Activated B cell treated with CpG ODN at 0.5 μM for 24 hours (primary cell): ENCODE measurements at regions of chr16 and their contacts with region 1.

Region 1: DNA sequence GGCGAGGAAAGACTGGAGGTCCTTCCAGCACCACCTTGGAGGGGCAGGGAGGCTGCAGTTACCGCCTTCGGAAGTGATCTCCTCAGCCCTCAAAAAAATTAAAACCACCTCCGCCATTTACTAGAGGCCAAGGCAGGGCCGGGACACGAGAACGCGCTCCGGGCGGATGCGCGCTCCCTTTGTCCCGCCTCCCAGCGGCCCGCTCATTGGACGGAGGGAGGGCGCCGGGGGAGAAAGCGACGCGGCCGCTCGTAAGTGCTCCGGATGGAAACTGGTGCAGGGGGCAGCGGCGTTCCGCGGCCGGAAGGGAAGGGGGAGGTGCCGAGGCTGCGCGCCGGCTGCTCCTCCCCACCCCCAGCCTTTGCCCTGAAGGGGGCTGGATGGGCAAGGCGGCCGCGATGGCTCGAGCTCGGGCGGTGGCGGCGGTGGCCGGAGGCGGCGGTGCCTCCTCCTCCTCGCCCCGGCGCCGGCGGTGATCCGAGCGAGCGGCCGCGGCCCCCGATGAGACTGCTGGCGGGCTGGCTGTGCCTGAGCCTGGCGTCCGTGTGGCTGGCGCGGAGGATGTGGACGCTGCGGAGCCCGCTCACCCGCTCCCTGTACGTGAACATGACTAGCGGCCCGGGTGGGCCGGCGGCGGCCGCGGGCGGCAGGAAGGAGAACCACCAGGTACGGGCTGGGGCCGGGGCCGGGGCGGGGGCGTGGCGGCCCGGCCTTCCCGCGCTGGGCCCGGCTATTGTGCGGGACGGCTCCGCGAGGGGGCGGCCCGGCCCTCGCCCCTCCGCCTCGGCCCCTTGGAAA is at the start of gene METTL9:
- DNase-seq: peak; percentile 94
- ATAC-seq: peak; percentile 92
- H3K4me3 Mint-ChIP-seq: peak within 1 kb of the TSS; percentile 89
- H3K27ac Mint-ChIP-seq: peak within 1 kb of the TSS; percentile 93
- H3K4me1 Mint-ChIP-seq: peaks cover 33% of the 10 kb centered on the region
- H3K27me3 Mint-ChIP-seq: no peaks in the 10 kb centered on the region
- CTCF ChIP-seq: no peak
- total RNA-seq, gene METTL9: 53.3 and 59.2 TPM in 2 replicates

Region 2: GRCh38 chr16:21300309-21301167 is 298.9 kb before region 1 on chr16:
- CTCF ChIA-PET with region 1: no interaction called
- POLR2A ChIA-PET with region 1: no interaction called
- intact Hi-C with region 1: no loop called
- DNase-seq: peak; percentile 43
- ATAC-seq: peak; percentile 43
- H3K4me3 Mint-ChIP-seq: peak overlapping the region; percentile 97
- H3K27ac Mint-ChIP-seq: peak overlapping the region; percentile 88
- H3K4me1 Mint-ChIP-seq: peaks cover 30% of the 10 kb centered on the region
- H3K27me3 Mint-ChIP-seq: peaks cover 3% of the 10 kb centered on the region
- CTCF ChIP-seq: no peak

Region 3: GRCh38 chr16:21523411-21524067 is 75.9 kb before region 1 on chr16:
- CTCF ChIA-PET with region 1: no interaction called
- POLR2A ChIA-PET with region 1: no interaction called
- intact Hi-C with region 1: loop called (anchors 1 kb)
- DNase-seq: no peak
- ATAC-seq: no peak
- H3K4me3 Mint-ChIP-seq: no peak overlapping the region
- H3K27ac Mint-ChIP-seq: peak overlapping the region; percentile 39
- H3K4me1 Mint-ChIP-seq: peaks cover 3% of the 10 kb centered on the region
- H3K27me3 Mint-ChIP-seq: no peaks in the 10 kb centered on the region
- CTCF ChIP-seq: no peak

Region 4: DNA sequence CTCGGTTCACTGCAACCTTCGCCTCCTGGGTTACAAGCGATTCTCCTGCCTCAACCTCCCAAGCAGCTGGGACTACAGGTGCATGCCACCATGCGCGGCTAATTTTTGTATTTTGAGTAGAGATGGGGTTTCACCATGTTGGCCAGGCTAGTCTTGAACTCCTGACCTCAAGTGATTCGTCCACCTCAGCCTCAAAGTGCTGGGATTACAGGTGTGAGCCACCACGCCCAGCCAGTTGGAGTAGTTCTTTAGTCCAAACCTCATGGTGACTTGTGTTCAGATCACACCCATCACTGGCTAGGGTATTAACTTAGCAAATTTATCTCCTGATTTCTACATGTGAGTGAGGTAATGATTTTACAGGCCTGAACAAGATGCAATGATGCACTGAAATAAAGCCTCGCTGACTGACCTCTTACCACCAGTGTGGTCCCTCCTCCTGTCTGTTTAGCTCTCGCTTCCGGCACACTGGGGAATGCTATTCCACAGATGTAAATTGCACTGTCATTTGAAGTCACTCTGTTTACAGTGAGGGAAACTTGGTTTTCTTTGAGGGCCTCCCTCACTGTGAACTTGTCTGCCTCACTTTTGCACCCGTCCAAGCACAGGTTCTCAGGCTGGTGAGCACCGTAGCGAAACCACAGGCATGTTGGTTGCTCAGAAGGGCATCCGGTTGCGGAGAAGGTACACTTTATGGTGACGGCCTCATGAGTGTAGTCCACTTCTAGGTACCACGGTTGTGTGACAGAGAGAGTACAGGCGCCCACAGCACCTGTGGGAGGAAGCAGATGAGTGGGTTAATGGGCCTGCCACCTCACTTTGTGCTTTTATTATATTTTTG is 47.5 kb after region 1 on chr16:
- CTCF ChIA-PET with region 1: no interaction called
- POLR2A ChIA-PET with region 1: interaction called, 12 read pairs
- intact Hi-C with region 1: loop called (anchors 1 kb)
- DNase-seq: peak; percentile 42
- ATAC-seq: peak; percentile 83
- H3K4me3 Mint-ChIP-seq: peak overlapping the region; percentile 53
- H3K27ac Mint-ChIP-seq: peak overlapping the region; percentile 89
- H3K4me1 Mint-ChIP-seq: peaks cover 77% of the 10 kb centered on the region
- H3K27me3 Mint-ChIP-seq: no peaks in the 10 kb centered on the region
- CTCF ChIP-seq: no peak

Region 5: DNA sequence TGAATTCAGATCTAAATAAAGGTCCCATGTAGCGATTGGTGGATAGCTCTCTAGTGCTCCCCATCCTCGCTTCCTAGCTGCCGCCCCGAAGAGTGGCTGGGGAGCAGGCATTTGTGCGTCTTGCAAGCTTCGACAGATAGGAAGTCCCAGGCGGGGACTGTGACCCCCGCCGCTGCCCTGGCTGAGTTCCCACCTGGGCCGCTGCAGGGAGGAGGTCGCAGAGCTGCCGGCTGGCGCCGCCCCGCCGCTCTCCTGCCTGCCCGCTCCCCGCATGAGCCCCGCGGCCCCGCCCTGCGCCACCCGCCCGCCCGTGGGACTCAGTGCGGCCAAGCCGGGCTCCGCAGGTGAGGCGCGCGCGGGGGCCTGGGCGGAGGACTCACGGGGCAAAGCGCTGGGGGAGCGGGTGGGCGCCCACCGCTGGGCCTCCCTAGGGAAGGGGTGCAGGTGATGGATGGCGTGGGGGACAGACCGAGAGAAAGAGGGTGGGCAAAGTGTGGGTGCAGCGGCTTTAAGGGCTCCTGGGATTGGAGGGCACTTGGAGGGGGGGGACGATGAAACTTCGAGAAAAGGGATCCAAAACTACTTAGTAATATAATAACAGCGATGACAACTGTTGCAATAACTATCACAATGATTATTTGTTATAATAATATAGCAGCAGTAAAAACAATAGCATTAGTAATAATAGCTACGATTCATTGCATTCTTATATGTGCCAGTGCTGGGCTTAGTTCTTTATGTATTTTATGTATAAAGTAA is 64.6 kb after region 1 on chr16 and contains the start of gene OTOA:
- CTCF ChIA-PET with region 1: no interaction called
- POLR2A ChIA-PET with region 1: no interaction called
- intact Hi-C with region 1: no loop called
- DNase-seq: peak; percentile 43
- ATAC-seq: peak; percentile 87
- H3K4me3 Mint-ChIP-seq: peak within 1 kb of the TSS; percentile 78
- H3K27ac Mint-ChIP-seq: no peak within 1 kb of the TSS
- H3K4me1 Mint-ChIP-seq: peaks cover 35% of the 10 kb centered on the region
- H3K27me3 Mint-ChIP-seq: peaks cover 2% of the 10 kb centered on the region
- CTCF ChIP-seq: no peak
- total RNA-seq, gene OTOA: 0.42 and 0.60 TPM in 2 replicates

Region 6: DNA sequence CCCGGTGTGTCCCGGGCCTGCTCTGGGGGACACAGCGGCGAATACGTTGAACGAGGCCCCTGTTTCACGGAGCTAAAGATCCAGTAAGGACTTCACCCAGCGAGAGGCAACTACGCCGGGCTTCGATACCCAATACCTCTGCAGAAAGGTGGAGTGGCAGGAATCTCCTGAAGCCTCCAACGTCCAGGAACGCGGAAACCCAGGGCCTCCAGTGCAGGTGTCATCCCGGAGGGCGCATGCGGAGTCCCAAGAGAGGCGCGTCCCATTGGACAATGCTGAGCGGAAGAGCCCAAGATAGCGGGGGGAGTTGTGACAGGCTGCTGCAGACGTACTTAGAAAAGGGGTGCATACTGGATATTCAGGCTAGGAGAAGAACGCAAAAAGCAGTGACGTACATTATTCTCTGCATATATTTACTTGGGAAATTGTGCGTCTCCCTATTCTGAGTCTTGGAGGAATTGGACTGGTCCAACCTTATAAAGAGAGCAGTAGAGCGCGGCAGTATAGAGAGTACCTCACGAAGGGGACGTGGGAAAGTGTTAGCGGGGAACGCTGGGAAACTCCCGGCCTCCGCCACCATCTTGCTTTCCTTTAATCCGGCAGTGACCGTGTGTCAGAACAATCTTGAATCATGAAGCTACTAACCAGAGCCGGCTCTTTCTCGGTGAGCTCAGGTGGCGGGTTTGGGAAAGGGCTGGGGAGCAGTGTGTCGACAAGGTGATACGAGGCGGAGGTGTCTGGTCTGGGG is 353.5 kb after region 1 on chr16 and contains the start of gene UQCRC2:
- CTCF ChIA-PET with region 1: no interaction called
- POLR2A ChIA-PET with region 1: no interaction called
- intact Hi-C with region 1: loop called (anchors 5 kb)
- DNase-seq: peak; percentile 76
- ATAC-seq: peak; percentile 89
- H3K4me3 Mint-ChIP-seq: peak within 1 kb of the TSS; percentile 98
- H3K27ac Mint-ChIP-seq: peak within 1 kb of the TSS; percentile 98
- H3K4me1 Mint-ChIP-seq: peaks cover 65% of the 10 kb centered on the region
- H3K27me3 Mint-ChIP-seq: no peaks in the 10 kb centered on the region
- CTCF ChIP-seq: no peak
- total RNA-seq, gene UQCRC2: 207 and 230 TPM in 2 replicates

Region 7: GRCh38 chr16:22252317-22252716 is 652.9 kb after region 1 on chr16:
- CTCF ChIA-PET with region 1: no interaction called
- POLR2A ChIA-PET with region 1: interaction called, 15 read pairs
- intact Hi-C with region 1: no loop called
- DNase-seq: no peak
- ATAC-seq: no peak
- H3K4me3 Mint-ChIP-seq: no peak overlapping the region
- H3K27ac Mint-ChIP-seq: no peak overlapping the region
- H3K4me1 Mint-ChIP-seq: peaks cover 4% of the 10 kb centered on the region
- H3K27me3 Mint-ChIP-seq: no peaks in the 10 kb centered on the region
- CTCF ChIP-seq: no peak

Region 8: DNA sequence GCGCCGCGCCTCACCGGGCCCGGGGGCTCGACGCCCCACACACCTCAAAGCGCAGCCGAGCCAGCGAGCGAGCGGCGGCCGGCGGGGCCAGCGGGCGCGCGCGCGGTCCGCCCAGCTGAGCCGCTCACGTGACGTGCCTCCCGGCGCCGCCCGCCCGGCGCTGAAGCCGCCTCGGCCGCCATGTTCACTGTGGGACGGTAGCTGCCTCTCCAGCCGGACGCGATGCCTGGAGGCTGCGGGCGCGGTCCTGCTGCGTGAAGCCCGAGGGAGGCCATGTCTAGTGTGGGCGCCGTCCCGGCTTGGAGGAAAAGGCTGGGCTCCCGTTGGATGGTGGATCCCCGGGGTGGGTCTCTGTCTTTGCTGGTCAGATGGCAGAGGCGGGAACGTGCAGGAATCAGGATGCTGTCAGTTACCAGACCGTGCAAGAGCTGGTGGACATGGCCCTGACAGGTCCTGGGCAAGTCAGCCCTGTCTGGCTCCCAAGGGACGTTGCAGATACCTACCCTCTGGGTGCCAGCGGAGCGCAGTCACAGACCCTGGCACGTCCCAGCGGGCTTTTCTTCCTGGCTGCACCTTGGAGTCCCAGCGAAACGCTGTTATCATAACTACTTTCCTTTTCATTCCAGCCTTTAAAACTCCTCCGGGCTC is 1550.0 kb after region 1 on chr16 and contains the start of gene USP31:
- CTCF ChIA-PET with region 1: no interaction called
- POLR2A ChIA-PET with region 1: no interaction called
- intact Hi-C with region 1: loop called (anchors 2 kb)
- DNase-seq: peak; percentile 82
- ATAC-seq: peak; percentile 96
- H3K4me3 Mint-ChIP-seq: peak within 1 kb of the TSS; percentile 91
- H3K27ac Mint-ChIP-seq: peak within 1 kb of the TSS; percentile 81
- H3K4me1 Mint-ChIP-seq: peaks cover 11% of the 10 kb centered on the region
- H3K27me3 Mint-ChIP-seq: peaks cover 3% of the 10 kb centered on the region
- CTCF ChIP-seq: no peak
- total RNA-seq, gene USP31: 3.6 and 4.6 TPM in 2 replicates